Right lobe of liver (tissue), 6 donors: ENCODE measurements at regions of chr12 and their contacts with region 1.

Region 1: DNA sequence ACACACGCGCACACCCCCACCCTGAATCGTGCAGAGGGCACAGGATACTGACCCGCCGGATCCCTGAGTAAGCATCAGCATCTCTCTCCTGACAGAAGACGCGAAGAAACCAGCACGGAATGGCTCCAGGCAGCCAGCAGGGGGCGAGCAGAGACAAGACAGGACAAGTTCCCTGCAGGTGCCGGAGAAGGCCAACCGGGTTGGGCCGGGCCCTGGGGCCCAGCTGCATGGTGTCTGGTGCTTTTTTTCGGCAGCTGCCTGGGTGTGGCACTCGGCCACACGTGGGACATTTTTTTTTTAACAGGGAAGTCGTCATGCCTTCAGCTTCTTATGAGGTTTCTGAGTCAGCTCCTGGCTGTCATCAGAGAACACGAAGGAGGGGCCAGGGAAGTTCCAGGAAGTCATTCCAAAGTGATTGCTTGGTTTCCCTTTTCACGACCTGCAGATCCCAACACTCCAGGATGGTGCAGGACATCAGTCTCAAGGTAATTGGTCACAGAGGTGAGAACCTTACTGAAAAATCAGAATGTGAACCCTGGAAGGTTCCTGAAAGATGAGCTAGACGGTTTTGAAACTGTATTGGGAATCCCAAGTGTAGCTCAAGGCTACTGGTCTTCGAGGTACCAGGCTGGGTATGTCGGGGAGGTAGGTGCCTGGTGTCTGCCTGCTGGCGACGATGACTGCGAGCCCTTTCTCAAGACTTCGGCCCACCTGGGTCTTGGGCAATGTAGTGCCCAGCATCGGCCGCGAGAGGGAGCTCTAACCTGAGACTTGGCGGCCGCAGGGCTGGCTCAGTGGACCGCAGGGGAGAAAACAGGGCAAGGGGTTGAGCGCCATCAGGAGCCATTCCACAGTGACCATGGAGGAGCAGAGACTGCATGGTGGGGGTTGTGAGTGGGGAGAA is 190.8 kb upstream of the PRMT8 start:
- DNase-seq: peak; percentile 84 to 87 (median 87)
- ATAC-seq: peak; percentile 77 to 85 (median 80)
- H3K4me3 ChIP-seq: no peak overlapping the region
- H3K27ac ChIP-seq: no peak overlapping the region
- H3K4me1 ChIP-seq: peaks cover 0 to 9% (median 3%) of the 10 kb centered on the region in 4 donors
- H3K27me3 ChIP-seq: no peaks in the 10 kb centered on the region
- CTCF ChIP-seq: peak; percentile 86 to 94 (median 91)
- POLR2A ChIP-seq: no peak

Region 2: GRCh38 chr12:3777206-3777809 is 477.1 kb after region 1 on chr12:
- intact Hi-C with region 1: loop called in 1 of 2 experiments (anchors 10 kb)
- DNase-seq: no peak
- ATAC-seq: peak; percentile 83 to 94 (median 90)
- H3K4me3 ChIP-seq: no peak overlapping the region
- H3K27ac ChIP-seq: no peak overlapping the region
- H3K4me1 ChIP-seq: no peaks in the 10 kb centered on the region
- H3K27me3 ChIP-seq: no peaks in the 10 kb centered on the region
- CTCF ChIP-seq: peak; percentile 71 to 81 (median 76)
- POLR2A ChIP-seq: no peak

Region 3: DNA sequence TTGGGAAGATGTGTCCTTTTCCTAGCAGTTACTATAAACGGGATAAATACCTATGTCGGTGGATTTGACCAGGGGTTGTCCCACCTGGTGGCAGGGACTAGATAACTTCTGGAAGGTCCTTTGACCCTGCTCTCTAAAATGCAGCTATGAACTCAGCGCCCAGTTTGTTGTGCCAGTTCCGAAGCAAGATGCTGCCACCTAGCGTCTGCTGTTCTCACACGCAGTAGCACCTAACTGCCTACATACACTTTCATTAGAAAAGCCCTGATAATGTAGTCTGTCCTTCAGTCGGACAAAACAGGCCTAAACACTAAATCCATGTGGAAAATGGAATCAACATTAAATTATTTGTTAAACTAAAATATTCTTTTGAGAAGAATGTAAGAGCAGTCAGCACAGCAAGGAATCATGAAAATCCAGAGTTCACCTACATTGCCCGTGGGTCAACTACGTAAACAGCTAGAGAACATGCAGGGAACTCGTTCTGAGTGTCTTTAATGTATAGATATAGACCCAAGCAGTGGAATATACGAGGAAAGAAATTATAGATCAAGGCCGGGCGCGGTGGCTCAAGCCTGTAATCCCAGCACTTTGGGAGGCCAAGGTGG is 503.8 kb after region 1 on chr12:
- intact Hi-C with region 1: loop called (anchors 5 to 10 kb)
- DNase-seq: peak; percentile 73 to 85 (median 79)
- ATAC-seq: peak; percentile 94 to 98 (median 96)
- H3K4me3 ChIP-seq: no peak overlapping the region
- H3K27ac ChIP-seq: no peak overlapping the region
- H3K4me1 ChIP-seq: peaks cover 0 to 11% (median 5%) of the 10 kb centered on the region in 4 donors
- H3K27me3 ChIP-seq: no peaks in the 10 kb centered on the region
- CTCF ChIP-seq: peak; percentile 79 to 91 (median 89)
- POLR2A ChIP-seq: no peak

Region 4: GRCh38 chr12:3809347-3810015 is 509.3 kb after region 1 on chr12:
- intact Hi-C with region 1: loop called (anchors 5 to 10 kb)
- DNase-seq: no peak
- ATAC-seq: no peak
- H3K4me3 ChIP-seq: no peak overlapping the region
- H3K27ac ChIP-seq: no peak overlapping the region
- H3K4me1 ChIP-seq: peaks cover 0 to 1% (median 0%) of the 10 kb centered on the region in 4 donors
- H3K27me3 ChIP-seq: no peaks in the 10 kb centered on the region
- CTCF ChIP-seq: no peak
- POLR2A ChIP-seq: no peak

Region 5: DNA sequence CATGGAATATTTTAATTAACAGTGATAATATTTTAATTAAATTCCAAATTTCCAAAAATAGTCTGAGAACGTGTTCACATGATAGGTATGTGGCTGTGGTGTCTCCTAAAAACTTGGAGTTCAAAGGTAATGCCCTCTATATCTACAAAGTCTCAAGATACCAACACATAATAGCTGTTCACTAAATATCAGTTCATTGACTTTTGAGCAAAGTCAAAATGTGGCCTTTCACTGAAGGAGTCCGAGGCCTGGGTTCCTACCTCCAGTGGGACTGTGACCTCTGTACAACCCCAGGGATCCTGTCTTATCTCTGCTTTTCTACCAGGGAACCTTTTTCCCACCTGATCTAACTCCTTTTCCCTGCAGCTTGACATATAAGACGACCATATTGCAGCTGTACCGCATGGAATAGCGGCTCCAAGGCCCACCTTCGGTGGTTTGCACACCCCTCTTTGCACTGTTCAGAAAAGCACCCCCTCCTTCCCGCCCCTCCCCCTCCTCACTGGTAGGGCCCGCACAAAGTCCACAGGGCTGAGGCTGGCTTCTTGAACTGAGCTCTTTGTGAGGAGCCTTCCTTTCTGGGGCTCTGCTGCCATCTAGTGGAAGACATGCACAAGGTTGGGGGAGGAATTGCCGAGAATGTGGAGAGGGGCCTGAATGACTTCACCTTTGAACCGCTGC is 976.5 kb after region 1 on chr12:
- intact Hi-C with region 1: loop called in 1 of 2 experiments (anchors 10 kb)
- DNase-seq: peak; percentile 73 to 82 (median 75)
- ATAC-seq: peak; percentile 70 to 77 (median 76)
- H3K4me3 ChIP-seq: no peak overlapping the region
- H3K27ac ChIP-seq: no peak overlapping the region
- H3K4me1 ChIP-seq: peaks cover 0 to 30% (median 0%) of the 10 kb centered on the region in 4 donors
- H3K27me3 ChIP-seq: peaks cover 0 to 25% of the 10 kb centered on the region in 2 donors
- CTCF ChIP-seq: peak; percentile 78 to 90 (median 82)
- POLR2A ChIP-seq: no peak